A549 (cell line): ENCODE measurements at regions of chr20 and their contacts with region 1.

Region 1: DNA sequence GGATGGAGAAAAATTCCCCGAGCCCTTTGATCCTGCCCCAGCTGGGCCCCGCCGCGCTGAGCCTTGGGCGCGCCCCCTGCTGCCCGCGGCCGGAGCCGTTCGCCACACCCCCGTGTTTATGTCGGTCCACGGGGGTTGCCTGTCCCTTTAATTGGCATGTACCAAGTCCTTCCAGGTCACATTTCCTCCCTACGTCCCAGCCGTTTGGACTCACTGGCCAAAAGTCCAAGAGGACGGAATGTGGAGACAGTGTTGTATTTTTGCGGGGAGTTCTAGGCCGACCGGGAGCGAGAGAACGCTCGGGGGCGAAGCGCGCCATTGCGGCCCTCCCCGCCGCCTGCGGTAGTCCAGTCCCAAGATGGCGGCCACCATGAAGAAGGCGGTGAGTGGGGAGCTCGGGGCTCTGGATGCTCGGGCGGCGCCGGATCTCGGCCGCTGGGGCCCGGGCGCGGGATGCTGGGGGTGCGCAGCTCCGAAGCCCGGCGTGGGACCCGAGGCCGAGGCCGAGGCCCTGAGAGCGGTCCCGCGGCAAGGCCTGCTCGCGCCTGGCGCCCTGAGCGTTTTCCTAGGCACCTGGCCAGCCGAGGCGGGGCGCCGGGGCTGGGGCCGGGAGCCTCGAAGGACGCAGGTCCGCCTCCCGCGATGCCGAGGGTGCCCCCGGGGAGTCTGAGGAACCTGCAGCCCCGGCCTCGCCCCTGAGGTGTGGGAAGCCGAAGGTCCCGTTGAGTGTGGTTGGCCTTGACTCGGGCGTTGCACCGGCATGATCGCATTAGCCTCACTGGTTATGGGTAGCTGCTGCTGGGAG is at the start of gene PFDN4:
- DNase-seq: peak; percentile 89 to 93
- ATAC-seq: peak; percentile 96 to 98
- H3K4me3 ChIP-seq: peak within 1 kb of the TSS; percentile 69
- H3K27ac ChIP-seq: peak within 1 kb of the TSS; percentile 97 to 99
- H3K4me1 ChIP-seq: peaks cover 13% of the 10 kb centered on the region
- CTCF ChIP-seq: peak; percentile 80
- EP300 ChIP-seq: no peak
- POLR2A ChIP-seq: peak; percentile 42; the same call in 1 of the 2 replicates
- RAD21 ChIP-seq: peak; percentile 43 to 45; a peak in 4 of 5 replicates
- polyA plus RNA-seq, gene PFDN4: 78.7 and 146 TPM in 2 replicates

Region 2: DNA sequence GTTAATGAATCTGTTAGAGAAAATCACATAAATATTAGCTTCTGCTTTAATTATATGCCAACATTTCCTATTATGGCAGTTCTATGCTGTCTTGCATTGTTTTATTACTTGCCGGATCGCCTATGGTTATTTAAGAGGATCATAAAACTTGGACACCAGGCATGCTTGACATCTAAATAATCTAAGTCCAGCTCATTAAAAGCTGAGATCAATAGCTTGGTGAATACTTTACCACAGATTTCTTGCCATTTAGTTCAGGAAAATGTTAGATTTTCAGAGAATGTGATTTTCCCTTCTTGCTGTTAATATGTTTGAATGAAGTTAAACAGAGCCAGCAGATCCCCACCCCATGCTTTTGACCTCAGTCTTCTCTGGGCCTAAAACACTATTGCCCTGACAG is 118.7 kb after region 1 on chr20:
- CTCF ChIA-PET with region 1: no interaction called
- POLR2A ChIA-PET with region 1: no interaction called
- DNase-seq: no peak
- ATAC-seq: no peak
- H3K4me3 ChIP-seq: no peak overlapping the region
- H3K27ac ChIP-seq: no peak overlapping the region
- H3K4me1 ChIP-seq: no peaks in the 10 kb centered on the region
- CTCF ChIP-seq: no peak
- EP300 ChIP-seq: no peak
- POLR2A ChIP-seq: no peak
- RAD21 ChIP-seq: no peak

Region 3: GRCh38 chr20:54649511-54649962 is 441.6 kb after region 1 on chr20:
- CTCF ChIA-PET with region 1: interaction called, 19 read pairs
- POLR2A ChIA-PET with region 1: no interaction called
- DNase-seq: peak; percentile 58 to 75
- ATAC-seq: peak; percentile 89 to 95; a peak in 5 of 6 replicates
- H3K4me3 ChIP-seq: no peak overlapping the region
- H3K27ac ChIP-seq: no peak overlapping the region
- H3K4me1 ChIP-seq: peaks cover 11% of the 10 kb centered on the region; the same call in 2 of the 3 replicates
- CTCF ChIP-seq: peak; percentile 73
- EP300 ChIP-seq: no peak
- POLR2A ChIP-seq: no peak
- RAD21 ChIP-seq: peak; percentile 65